Caco-2 (cell line): ENCODE measurements at regions of chr4 and their contacts with region 1.

Region 1: DNA sequence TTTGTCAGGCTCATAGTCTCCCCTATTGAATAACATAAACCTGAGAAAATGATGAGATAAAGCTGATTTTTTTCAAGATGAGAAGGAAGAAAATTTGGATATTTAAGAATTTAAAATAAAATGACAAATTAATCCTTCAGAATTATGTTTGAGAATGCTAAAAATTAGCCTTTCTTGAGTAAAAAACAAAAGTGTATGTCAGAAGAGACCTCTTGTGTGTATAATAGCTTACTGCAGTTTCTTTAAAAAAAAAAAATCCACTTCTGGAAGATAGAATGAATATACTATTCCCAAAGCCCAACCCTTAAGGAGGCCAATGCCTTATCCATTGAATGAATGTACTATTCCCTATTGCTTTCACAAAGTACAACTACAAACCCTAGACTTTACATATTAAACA is 281.8 kb downstream of the RAPGEF2 start:
- DNase-seq: no peak
- H3K4me3 ChIP-seq: no peak overlapping the region
- H3K4me3 Mint-ChIP-seq: no peak overlapping the region
- H3K27ac Mint-ChIP-seq: no peak overlapping the region
- H3K4me1 ChIP-seq: no peaks in the 10 kb centered on the region
- H3K4me1 Mint-ChIP-seq: no peaks in the 10 kb centered on the region
- H3K27me3 ChIP-seq: no peaks in the 10 kb centered on the region
- H3K27me3 Mint-ChIP-seq: no peaks in the 10 kb centered on the region
- CTCF ChIP-seq: peak in 1 of 2 experiments; percentile 2

Region 2: GRCh38 chr4:159237975-159238374 is 146.7 kb before region 1 on chr4:
- CTCF ChIA-PET with region 1: interaction called, 20 read pairs
- POLR2A ChIA-PET with region 1: no interaction called
- intact Hi-C with region 1: no loop called
- DNase-seq: no peak
- H3K4me3 ChIP-seq: no peak overlapping the region
- H3K4me3 Mint-ChIP-seq: no peak overlapping the region
- H3K27ac Mint-ChIP-seq: no peak overlapping the region
- H3K4me1 ChIP-seq: no peaks in the 10 kb centered on the region
- H3K4me1 Mint-ChIP-seq: peaks cover 17% of the 10 kb centered on the region
- H3K27me3 ChIP-seq: no peaks in the 10 kb centered on the region
- H3K27me3 Mint-ChIP-seq: no peaks in the 10 kb centered on the region
- CTCF ChIP-seq: no peak